ENCODE measurements at regions of chr17 and their contacts with region 1.

Region 1: GRCh38 chr17:78250891-78251794 is 19.7 kb downstream of the TMEM235 start:
- DNase-seq: peak; percentile 90 to 98
- ATAC-seq: peak; percentile 81 to 90
- H3K4me3 ChIP-seq: no peak overlapping the region
- H3K27ac ChIP-seq: peak overlapping the region; percentile 52 to 73; a peak in 5 of 6 replicates
- H3K4me1 ChIP-seq: peaks cover 10% of the 10 kb centered on the region
- CTCF ChIP-seq: peak; percentile 100
- EP300 ChIP-seq: no peak
- POLR2A ChIP-seq: no peak
- RAD21 ChIP-seq: peak; percentile 98

Region 2: GRCh38 chr17:78082988-78083387 is 168.2 kb before region 1 on chr17:
- CTCF ChIA-PET with region 1: interaction called, 18 read pairs
- POLR2A ChIA-PET with region 1: no interaction called
- DNase-seq: no peak
- ATAC-seq: no peak
- H3K4me3 ChIP-seq: no peak overlapping the region
- H3K27ac ChIP-seq: no peak overlapping the region
- H3K4me1 ChIP-seq: no peaks in the 10 kb centered on the region
- CTCF ChIP-seq: no peak
- EP300 ChIP-seq: no peak
- POLR2A ChIP-seq: no peak
- RAD21 ChIP-seq: no peak

Region 3: GRCh38 chr17:78197147-78197832 is 53.9 kb before region 1 on chr17:
- CTCF ChIA-PET with region 1: interaction called, 16 read pairs
- POLR2A ChIA-PET with region 1: no interaction called
- DNase-seq: no peak
- ATAC-seq: peak in 1 of 2 experiments; percentile 52; a peak in 2 of 6 replicates
- H3K4me3 ChIP-seq: no peak overlapping the region
- H3K27ac ChIP-seq: no peak overlapping the region
- H3K4me1 ChIP-seq: no peaks in the 10 kb centered on the region
- CTCF ChIP-seq: no peak
- EP300 ChIP-seq: no peak
- POLR2A ChIP-seq: no peak
- RAD21 ChIP-seq: no peak

Region 4: GRCh38 chr17:78272181-78272913 is 21.2 kb after region 1 on chr17:
- CTCF ChIA-PET with region 1: interaction called, 40 read pairs
- POLR2A ChIA-PET with region 1: no interaction called
- DNase-seq: peak in 1 of 2 experiments; percentile 81
- ATAC-seq: peak; percentile 59 to 75
- H3K4me3 ChIP-seq: no peak overlapping the region
- H3K27ac ChIP-seq: peak overlapping the region in 1 of 2 experiments; percentile 40; a peak in 1 of 6 replicates
- H3K4me1 ChIP-seq: peaks cover 39% of the 10 kb centered on the region
- CTCF ChIP-seq: no peak
- EP300 ChIP-seq: no peak
- POLR2A ChIP-seq: no peak
- RAD21 ChIP-seq: no peak

Region 5: DNA sequence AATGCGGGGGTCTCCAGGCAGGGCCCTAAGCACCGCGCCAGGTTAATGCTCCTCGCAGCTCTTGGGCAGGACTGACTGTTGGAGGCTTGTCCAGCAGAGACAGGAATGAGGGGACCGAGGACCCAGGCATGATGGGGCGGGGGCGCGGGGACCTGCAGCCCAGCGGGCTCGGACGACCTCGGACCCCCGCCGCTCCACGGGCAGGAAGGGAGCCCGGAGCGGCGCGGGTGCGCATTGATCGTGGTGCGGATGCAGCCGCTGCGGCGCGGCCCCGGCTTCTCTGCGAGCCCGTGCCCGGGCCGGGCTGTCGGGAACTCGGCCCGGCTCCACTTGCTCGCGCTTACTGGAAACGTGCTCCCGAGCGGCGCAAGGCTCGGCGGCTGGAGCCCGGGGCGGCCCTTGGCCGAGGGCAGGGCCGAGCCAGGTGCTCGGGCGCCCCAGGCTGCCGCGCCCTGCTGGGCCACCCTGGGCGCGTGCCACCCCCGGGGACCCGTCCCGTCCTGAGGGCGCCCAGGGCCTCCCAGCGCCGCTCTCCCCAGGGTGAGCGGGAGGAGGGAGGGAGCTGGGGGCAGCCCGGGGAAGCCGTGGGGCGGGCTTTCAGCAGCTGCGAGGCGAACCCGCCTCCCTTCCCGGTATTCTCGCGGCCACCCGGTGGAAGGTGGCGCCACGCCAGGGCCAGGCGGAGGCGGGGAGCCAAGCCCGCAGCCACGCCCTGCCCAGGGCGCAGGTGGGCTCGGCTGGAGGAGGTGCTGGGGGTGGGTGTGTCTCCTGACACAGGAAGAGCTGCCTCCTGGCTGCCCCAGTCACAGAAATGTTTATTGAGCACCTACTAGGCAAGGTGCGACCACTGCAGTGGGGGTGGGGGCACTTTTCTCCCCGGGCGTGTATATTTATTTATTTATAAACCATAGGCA is 62.8 kb after region 1 on chr17:
- CTCF ChIA-PET with region 1: interaction called, 13 read pairs
- POLR2A ChIA-PET with region 1: no interaction called
- DNase-seq: peak; percentile 95 to 98
- ATAC-seq: peak; percentile 63 to 72
- H3K4me3 ChIP-seq: peak overlapping the region; percentile 42
- H3K27ac ChIP-seq: peak overlapping the region; percentile 94 to 95
- H3K4me1 ChIP-seq: peaks cover 57% of the 10 kb centered on the region
- CTCF ChIP-seq: no peak; the same call in 2 of the 3 replicates
- EP300 ChIP-seq: peak; percentile 31 to 57; a peak in 2 of 5 replicates
- POLR2A ChIP-seq: peak; percentile 64
- RAD21 ChIP-seq: peak in 1 of 2 experiments; percentile 50; a peak in 4 of 5 replicates

Region 6: GRCh38 chr17:78365561-78366108 is 114.5 kb after region 1 on chr17:
- CTCF ChIA-PET with region 1: interaction called, 36 read pairs
- POLR2A ChIA-PET with region 1: no interaction called
- DNase-seq: no peak
- ATAC-seq: no peak
- H3K4me3 ChIP-seq: no peak overlapping the region
- H3K27ac ChIP-seq: peak overlapping the region in 1 of 2 experiments; percentile 31; a peak in 2 of 6 replicates
- H3K4me1 ChIP-seq: peaks cover 4% of the 10 kb centered on the region
- CTCF ChIP-seq: no peak
- EP300 ChIP-seq: no peak
- POLR2A ChIP-seq: no peak
- RAD21 ChIP-seq: no peak

Measured in A549 (cell line).